Motor neuron (in vitro differentiated cells): ENCODE measurements at regions of chr1 and their contacts with region 1.

Region 1: GRCh38 chr1:9503001-9503675 is 36.1 kb upstream of the SLC25A33 start:
- ATAC-seq: peak in 4 of 8 experiments; percentile 55 to 72 (median 66)
- H3K4me3 ChIP-seq: no peak overlapping the region
- H3K27ac ChIP-seq: no peak overlapping the region
- H3K4me1 ChIP-seq: no peaks in the 10 kb centered on the region

Region 2: GRCh38 chr1:8941906-8942305 is 561.2 kb before region 1 on chr1:
- in situ Hi-C with region 1: loop called in 1 of 9 experiments (anchors 25 kb)
- ATAC-seq: peak; percentile 43 to 94 (median 80)
- H3K4me3 ChIP-seq: no peak overlapping the region
- H3K27ac ChIP-seq: no peak overlapping the region
- H3K4me1 ChIP-seq: peaks cover 47 to 49% of the 10 kb centered on the region in 2 donors

Region 3: DNA sequence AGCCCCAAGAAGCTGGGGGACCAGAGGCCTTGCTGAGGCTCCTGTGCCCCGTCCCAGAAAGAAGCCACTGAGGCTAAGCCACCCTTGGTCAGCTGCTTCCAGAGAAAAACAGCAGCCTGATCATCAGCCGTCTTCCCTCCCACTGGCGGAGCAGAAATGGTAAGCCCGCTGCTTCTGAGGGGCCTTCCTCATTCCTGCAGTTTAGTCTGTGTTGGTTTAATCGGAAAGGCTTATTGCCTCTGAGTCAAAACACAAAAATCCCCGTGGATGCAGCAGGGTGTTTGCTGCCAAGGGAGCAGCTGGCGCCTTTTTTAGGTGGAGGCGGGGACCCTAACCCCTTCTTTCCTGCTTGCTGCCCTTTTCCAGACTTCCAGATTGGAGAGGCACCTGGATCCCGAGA is 176.5 kb before region 1 on chr1:
- in situ Hi-C with region 1: no loop called
- ATAC-seq: peak in 1 of 8 experiments; percentile 23
- H3K4me3 ChIP-seq: no peak overlapping the region
- H3K27ac ChIP-seq: no peak overlapping the region
- H3K4me1 ChIP-seq: peaks cover 16 to 20% of the 10 kb centered on the region in 2 donors

Region 4: DNA sequence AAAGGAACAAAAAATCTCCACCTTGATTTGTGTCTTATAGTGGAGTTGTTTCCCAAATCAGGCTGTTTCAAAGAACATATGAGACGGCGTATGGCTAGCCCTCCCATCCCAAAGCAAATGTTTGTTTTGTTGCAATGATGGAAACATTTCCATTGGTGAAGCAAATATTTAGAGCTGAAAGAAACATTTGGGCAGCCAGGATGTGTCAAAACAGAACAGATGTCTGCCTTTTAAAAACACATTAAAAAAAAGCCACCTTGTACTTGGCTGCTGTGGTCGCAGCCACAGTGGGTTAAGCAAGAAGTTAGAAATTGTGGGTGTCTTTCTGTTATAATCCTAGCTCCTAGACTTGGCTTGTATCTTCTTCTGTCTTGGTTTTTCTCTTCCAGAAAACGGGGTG is 1087.9 kb after region 1 on chr1:
- in situ Hi-C with region 1: no loop called
- ATAC-seq: no peak
- H3K4me3 ChIP-seq: no peak overlapping the region
- H3K27ac ChIP-seq: no peak overlapping the region
- H3K4me1 ChIP-seq: peaks cover 50 to 61% of the 10 kb centered on the region in 2 donors